ENCODE measurements at regions of chr10 and their contacts with region 1.

Region 1: GRCh38 chr10:83533290-83533689 is 606.0 kb upstream of the GHITM start:
- DNase-seq: no peak
- ATAC-seq: no peak
- H3K4me3 Mint-ChIP-seq: no peak overlapping the region
- H3K27ac Mint-ChIP-seq: no peak overlapping the region
- H3K4me1 Mint-ChIP-seq: no peaks in the 10 kb centered on the region
- H3K27me3 Mint-ChIP-seq: no peaks in the 10 kb centered on the region

Region 2: GRCh38 chr10:82914655-82915136 is 618.6 kb before region 1 on chr10:
- CTCF ChIA-PET with region 1: no interaction called
- POLR2A ChIA-PET with region 1: no interaction called
- intact Hi-C with region 1: no loop called
- DNase-seq: no peak
- ATAC-seq: no peak
- H3K4me3 Mint-ChIP-seq: no peak overlapping the region
- H3K27ac Mint-ChIP-seq: no peak overlapping the region
- H3K4me1 Mint-ChIP-seq: no peaks in the 10 kb centered on the region
- H3K27me3 Mint-ChIP-seq: no peaks in the 10 kb centered on the region

Region 3: GRCh38 chr10:83607959-83608745 is 74.9 kb after region 1 on chr10:
- CTCF ChIA-PET with region 1: no interaction called
- POLR2A ChIA-PET with region 1: no interaction called
- intact Hi-C with region 1: loop called in 1 of 2 experiments (anchors 2 kb)
- DNase-seq: no peak
- ATAC-seq: no peak
- H3K4me3 Mint-ChIP-seq: no peak overlapping the region
- H3K27ac Mint-ChIP-seq: no peak overlapping the region
- H3K4me1 Mint-ChIP-seq: peaks cover 4% of the 10 kb centered on the region
- H3K27me3 Mint-ChIP-seq: no peaks in the 10 kb centered on the region

Measured in activated CD4-positive, alpha-beta T cell treated with anti-CD3 and anti-CD28 coated beads for 36 hours (primary cell).